A549 (cell line): ENCODE measurements at regions of chr5 and their contacts with region 1.

Region 1: GRCh38 chr5:138128334-138128733 is 10.9 kb downstream of the NME5 start:
- DNase-seq: no peak
- ATAC-seq: no peak
- H3K4me3 ChIP-seq: no peak overlapping the region
- H3K27ac ChIP-seq: no peak overlapping the region
- H3K4me1 ChIP-seq: 0 out of 3 replicates have a peak, but pooled peaks cover 4% of the 10 kb centered on the region
- CTCF ChIP-seq: no peak
- EP300 ChIP-seq: no peak
- POLR2A ChIP-seq: no peak
- RAD21 ChIP-seq: no peak

Region 2: DNA sequence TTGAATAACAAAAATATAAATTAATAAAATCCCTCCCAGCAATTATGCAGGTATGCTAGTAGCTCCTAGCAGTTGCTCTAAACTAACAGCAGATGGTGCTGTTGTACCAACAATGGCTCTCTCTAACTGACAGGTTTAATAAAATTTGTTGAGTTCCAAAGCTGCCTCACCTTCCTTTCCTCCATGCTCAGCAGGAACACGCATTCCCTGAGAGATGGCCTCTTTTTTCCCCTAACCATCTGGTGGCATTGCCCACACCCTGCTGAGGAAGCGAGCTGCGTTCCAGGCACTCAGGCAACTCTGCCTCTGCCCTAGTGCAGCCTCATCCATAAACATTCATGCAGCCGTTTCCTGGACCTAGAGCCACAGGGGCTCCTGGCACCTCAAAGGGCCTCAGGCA is 498.7 kb before region 1 on chr5:
- CTCF ChIA-PET with region 1: interaction called, 13 read pairs
- POLR2A ChIA-PET with region 1: no interaction called
- DNase-seq: peak; percentile 60 to 77
- ATAC-seq: peak; percentile 66 to 92
- H3K4me3 ChIP-seq: no peak overlapping the region
- H3K27ac ChIP-seq: no peak overlapping the region
- H3K4me1 ChIP-seq: no peaks in the 10 kb centered on the region
- CTCF ChIP-seq: peak; percentile 87
- EP300 ChIP-seq: no peak
- POLR2A ChIP-seq: no peak
- RAD21 ChIP-seq: peak; percentile 89 to 91

Region 3: GRCh38 chr5:138102454-138103318 is 25.6 kb before region 1 on chr5:
- CTCF ChIA-PET with region 1: interaction called, 7 read pairs
- POLR2A ChIA-PET with region 1: interaction called, 12 read pairs
- DNase-seq: no peak
- ATAC-seq: no peak; a peak in 2 of 6 replicates
- H3K4me3 ChIP-seq: no peak overlapping the region
- H3K27ac ChIP-seq: no peak overlapping the region
- H3K4me1 ChIP-seq: no peaks in the 10 kb centered on the region
- CTCF ChIP-seq: no peak
- EP300 ChIP-seq: no peak
- POLR2A ChIP-seq: no peak
- RAD21 ChIP-seq: no peak

Region 4: DNA sequence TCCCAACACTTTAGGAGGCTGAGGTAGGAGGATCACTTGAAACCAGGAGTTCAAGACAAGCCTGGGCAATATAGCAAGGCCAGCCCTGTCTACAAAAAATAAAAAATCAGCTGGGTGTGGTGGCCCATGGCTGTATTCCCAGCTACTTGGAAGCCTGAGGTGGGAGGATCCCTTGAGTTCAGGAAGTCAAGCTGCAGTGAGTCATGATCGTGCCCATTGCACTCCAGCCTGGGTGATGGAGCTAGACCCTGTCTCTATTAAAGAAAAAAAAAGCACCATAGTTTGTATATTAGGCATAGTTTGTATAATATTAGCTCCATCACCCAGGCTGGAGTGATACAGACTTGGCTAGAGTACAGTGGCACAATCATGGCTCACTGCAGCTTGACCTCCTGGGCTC is 20.5 kb after region 1 on chr5:
- CTCF ChIA-PET with region 1: interaction called, 85 read pairs
- POLR2A ChIA-PET with region 1: interaction called, 4 read pairs
- DNase-seq: peak in 1 of 2 experiments; percentile 67
- ATAC-seq: peak; percentile 83 to 84; a peak in 5 of 6 replicates
- H3K4me3 ChIP-seq: no peak overlapping the region
- H3K27ac ChIP-seq: peak overlapping the region in 1 of 2 experiments; percentile 29; a peak in 3 of 6 replicates
- H3K4me1 ChIP-seq: peaks cover 12% of the 10 kb centered on the region
- CTCF ChIP-seq: no peak
- EP300 ChIP-seq: no peak
- POLR2A ChIP-seq: no peak
- RAD21 ChIP-seq: no peak

Region 5: DNA sequence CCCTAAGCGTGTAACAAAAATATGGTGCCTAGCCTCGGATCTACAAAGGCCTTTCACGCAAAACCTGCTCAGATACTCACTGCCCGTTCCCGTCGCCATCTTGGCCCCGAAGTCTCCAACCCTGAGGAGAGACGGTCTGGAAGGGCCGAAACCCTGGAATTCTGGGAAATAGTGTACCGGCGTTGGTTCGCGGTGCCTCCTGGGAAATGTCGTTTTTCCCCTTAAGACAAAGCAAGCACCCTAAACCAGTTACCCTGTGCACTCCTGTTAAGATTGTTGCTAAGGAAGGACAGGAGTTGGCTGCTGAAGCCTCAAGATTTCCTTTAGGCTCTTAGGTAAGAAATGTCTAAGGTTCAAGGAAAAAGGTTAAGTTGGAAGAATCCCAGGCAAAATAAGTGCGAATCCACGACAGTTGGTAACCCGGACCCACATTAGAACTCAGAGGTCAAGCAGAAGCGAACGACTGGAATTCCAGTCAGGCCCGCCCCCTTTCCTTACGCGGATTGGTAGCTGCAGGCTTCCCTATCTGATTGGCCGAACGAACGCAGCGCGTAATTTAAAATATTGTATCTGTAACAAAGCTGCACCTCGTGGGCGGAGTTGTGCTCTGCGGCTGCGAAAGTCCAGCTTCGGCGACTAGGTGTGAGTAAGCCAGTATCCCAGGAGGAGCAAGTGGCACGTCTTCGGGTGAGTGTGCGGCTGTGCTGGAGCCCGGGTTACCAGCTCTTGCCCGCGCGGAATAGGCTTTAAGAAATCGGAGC is 50.4 kb after region 1 on chr5 and contains the starts of genes BRD8 and KIF20A:
- CTCF ChIA-PET with region 1: no interaction called
- POLR2A ChIA-PET with region 1: no interaction called
- DNase-seq: peak; percentile 96 to 97
- ATAC-seq: peak; percentile 92 to 94
- H3K4me3 ChIP-seq: peak within 1 kb of the TSS; percentile 80
- H3K27ac ChIP-seq: peak within 1 kb of the TSS; percentile 76 to 92
- H3K4me1 ChIP-seq: peaks cover 15% of the 10 kb centered on the region
- CTCF ChIP-seq: no peak
- EP300 ChIP-seq: no peak
- POLR2A ChIP-seq: peak; percentile 80
- RAD21 ChIP-seq: no peak
- polyA plus RNA-seq, gene BRD8: 82.3 and 85.8 TPM in 2 replicates
- polyA plus RNA-seq, gene KIF20A: 37.4 and 42.2 TPM in 2 replicates